PC-3 (cell line): ENCODE measurements at regions of chr14 and their contacts with region 1.

Region 1: DNA sequence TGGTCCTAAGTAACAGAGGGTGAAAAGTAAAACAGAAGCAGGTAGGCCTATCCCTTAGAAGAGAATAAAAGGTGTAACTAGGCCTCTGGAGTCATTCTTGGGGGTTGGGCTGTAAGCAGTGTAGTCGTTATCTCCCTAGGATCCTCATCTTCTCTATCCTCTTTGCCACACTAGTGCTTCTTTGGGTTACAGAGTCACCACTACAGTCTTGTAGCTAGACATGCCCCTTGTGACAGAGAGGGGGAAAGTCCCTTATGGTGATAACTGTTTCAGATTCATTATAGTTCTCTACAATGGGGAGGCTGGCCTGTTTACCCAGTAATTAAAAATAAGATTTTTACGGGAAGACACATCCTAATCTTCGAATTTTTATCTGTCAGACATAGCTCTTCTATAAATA is 16.4 kb upstream of the SRP54 start:
- DNase-seq: no peak
- ATAC-seq: no peak
- H3K4me3 ChIP-seq: no peak overlapping the region
- H3K27ac ChIP-seq: no peak overlapping the region
- H3K4me1 ChIP-seq: peaks cover 6% of the 10 kb centered on the region
- H3K27me3 ChIP-seq: no peaks in the 10 kb centered on the region
- CTCF ChIP-seq: no peak

Region 2: DNA sequence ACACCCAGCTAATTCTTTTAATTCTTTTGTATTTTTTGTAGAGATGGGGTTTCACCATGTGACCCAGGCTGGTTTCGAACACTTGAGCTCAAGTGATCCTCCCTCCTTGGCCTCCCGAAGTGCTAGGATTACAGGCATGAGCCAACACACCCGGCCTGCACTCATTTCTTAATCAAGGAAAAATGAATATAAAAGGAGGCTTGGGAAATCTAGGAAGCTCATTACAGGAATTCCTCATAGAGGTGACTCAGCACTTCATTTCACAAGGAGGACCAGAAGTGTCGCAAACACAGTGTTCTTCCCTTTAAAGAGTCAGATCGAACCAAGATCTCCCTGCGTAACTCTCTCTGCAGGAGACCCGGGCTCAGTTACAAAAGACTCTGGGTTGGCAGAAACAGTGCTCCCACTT is 407.9 kb after region 1 on chr14:
- CTCF ChIA-PET with region 1: no interaction called
- POLR2A ChIA-PET with region 1: no interaction called
- intact Hi-C with region 1: no loop called
- DNase-seq: peak; percentile 84
- ATAC-seq: peak; percentile 30; the same call in 1 of the 2 replicates
- H3K4me3 ChIP-seq: no peak overlapping the region
- H3K27ac ChIP-seq: peak overlapping the region; percentile 15
- H3K4me1 ChIP-seq: peaks cover 20% of the 10 kb centered on the region
- H3K27me3 ChIP-seq: no peaks in the 10 kb centered on the region
- CTCF ChIP-seq: no peak

Region 3: DNA sequence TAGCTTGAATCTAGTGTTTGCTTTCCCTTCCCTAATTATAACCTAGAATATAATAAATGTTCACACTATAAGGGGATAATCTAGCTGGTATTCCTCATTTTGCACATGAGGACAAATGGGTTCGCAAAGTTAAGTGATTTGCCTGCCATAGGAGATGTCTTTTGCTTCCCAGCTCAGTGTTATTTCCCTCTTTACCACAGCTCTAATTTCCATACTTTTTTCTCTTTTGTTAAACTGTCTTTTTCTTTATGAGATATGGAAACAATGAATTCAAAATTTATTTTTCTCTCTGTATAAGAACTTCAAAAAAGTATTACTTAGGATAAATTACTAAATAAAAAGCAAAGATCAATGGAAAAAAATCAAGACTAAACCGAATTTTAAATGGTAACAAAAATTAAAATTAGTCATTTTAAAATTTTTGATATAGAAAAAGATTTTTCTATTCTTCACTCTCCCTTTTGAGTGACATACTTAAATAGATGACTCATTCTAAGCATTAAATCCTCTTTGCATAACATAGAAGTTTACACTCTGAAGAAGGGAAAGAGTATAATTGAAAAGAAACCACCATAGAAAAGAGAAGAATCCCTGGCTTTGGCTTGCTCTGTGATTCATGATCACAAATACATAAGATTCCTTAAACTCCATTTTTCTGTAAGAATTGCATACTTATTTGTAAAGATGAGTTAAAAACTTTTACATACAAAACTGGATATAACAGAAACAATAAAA is 664.8 kb after region 1 on chr14:
- CTCF ChIA-PET with region 1: no interaction called
- POLR2A ChIA-PET with region 1: interaction called, 10 read pairs
- intact Hi-C with region 1: no loop called
- DNase-seq: no peak
- ATAC-seq: peak; percentile 51; the same call in 1 of the 2 replicates
- H3K4me3 ChIP-seq: no peak overlapping the region
- H3K27ac ChIP-seq: no peak overlapping the region
- H3K4me1 ChIP-seq: no peaks in the 10 kb centered on the region
- H3K27me3 ChIP-seq: no peaks in the 10 kb centered on the region
- CTCF ChIP-seq: no peak